Calu3 (cell line): ENCODE measurements at regions of chr10 and their contacts with region 1.

Region 1: DNA sequence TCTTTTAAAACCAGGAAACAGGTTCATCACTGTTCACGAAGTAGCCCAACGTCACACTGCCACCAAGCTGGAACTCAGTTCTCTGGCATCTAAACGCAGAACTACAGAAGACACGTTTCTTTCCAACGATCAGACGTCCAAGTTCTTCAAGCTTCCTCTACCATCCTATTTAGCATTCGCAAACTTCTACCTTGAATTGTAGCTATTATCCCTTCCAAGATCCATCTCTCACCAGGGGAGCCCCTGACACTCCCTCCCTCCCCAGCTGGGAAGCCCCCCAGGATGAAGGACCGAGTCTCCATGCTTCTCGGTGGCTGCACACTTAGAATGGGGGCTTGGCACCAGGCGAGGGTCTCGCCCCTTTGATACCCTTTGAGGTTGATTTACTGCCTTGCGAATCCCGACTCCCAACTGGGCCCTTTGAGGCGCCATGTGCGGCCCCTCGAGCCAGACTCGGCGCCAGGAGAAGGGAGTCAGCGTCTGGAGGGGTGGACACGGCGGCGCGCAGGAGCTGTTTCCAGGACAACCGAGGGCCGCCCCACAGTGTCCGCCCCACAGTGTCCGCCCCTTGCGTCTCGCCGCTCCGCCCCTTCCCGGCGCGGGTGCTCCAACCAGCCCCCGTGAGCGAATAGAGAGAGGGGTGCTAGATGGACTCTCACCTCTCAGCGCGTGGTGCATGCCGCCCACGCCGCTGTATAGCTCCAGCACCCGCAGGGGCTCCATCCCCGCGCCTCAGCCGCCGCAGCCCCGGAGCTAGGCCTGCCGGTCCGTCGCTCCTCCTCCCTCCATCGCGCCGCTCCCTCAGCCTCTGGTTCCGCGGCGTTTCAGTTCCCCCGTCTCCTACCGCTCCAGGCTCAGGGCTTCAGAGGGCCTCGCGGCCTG is at the start of gene TRDMT1:
- DNase-seq: peak; percentile 85
- H3K4me3 Mint-ChIP-seq: peak within 1 kb of the TSS; percentile 97
- H3K27ac Mint-ChIP-seq: peak within 1 kb of the TSS; percentile 91
- H3K4me1 Mint-ChIP-seq: peaks cover 44% of the 10 kb centered on the region
- H3K27me3 Mint-ChIP-seq: no peaks in the 10 kb centered on the region
- CTCF ChIP-seq: no peak
- total RNA-seq, gene TRDMT1: 7.9 and 10.3 TPM in 2 replicates

Region 2: GRCh38 chr10:16063350-16063749 is 1137.8 kb before region 1 on chr10:
- CTCF ChIA-PET with region 1: no interaction called
- intact Hi-C with region 1: no loop called
- DNase-seq: no peak
- H3K4me3 Mint-ChIP-seq: no peak overlapping the region
- H3K27ac Mint-ChIP-seq: no peak overlapping the region
- H3K4me1 Mint-ChIP-seq: no peaks in the 10 kb centered on the region
- H3K27me3 Mint-ChIP-seq: no peaks in the 10 kb centered on the region
- CTCF ChIP-seq: no peak

Region 3: GRCh38 chr10:16853201-16853600 is 348.0 kb before region 1 on chr10:
- CTCF ChIA-PET with region 1: no interaction called
- intact Hi-C with region 1: loop called (anchors 1 kb)
- DNase-seq: no peak
- H3K4me3 Mint-ChIP-seq: no peak overlapping the region
- H3K27ac Mint-ChIP-seq: no peak overlapping the region
- H3K4me1 Mint-ChIP-seq: peaks cover 27% of the 10 kb centered on the region
- H3K27me3 Mint-ChIP-seq: peaks cover 18% of the 10 kb centered on the region
- CTCF ChIP-seq: no peak

Region 4: GRCh38 chr10:17075533-17076359 is 125.4 kb before region 1 on chr10:
- CTCF ChIA-PET with region 1: no interaction called
- intact Hi-C with region 1: no loop called
- DNase-seq: peak; percentile 20
- H3K4me3 Mint-ChIP-seq: no peak overlapping the region
- H3K27ac Mint-ChIP-seq: peak overlapping the region; percentile 81
- H3K4me1 Mint-ChIP-seq: peaks cover 8% of the 10 kb centered on the region
- H3K27me3 Mint-ChIP-seq: no peaks in the 10 kb centered on the region
- CTCF ChIP-seq: no peak

Region 5: DNA sequence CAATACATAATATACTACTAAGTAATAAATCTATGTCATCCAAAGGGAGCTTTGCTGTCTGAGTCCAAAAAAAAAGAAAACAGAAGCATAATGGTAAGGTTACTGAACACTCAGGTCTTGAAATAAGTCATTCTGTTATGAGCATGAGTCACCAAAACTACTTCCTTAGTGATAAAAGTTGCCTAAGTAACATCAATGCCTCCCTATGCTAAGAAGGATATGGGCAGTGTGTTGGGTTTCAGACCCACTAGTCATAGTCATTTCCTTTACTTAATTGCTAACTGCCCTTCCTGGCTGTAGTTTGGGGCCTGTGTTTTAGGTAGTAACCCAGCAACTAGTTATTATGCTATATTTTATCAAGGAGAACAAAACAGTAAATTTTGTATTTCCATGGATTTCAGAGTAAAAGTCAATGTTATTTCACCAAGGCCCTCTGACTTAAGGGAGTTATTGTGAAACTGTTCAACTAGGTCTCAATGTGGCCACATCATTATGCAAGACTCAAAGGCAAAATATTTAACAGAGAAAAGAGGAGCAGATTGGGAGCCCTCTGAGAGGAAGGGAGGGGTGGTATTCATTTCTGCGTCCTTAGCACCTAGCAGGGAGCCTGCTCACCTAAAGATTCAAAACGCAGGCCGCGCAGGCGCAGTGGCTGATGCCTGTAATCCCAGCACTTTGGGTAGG is 15.2 kb after region 1 on chr10:
- CTCF ChIA-PET with region 1: interaction called, 10 read pairs
- intact Hi-C with region 1: no loop called
- DNase-seq: peak; percentile 58
- H3K4me3 Mint-ChIP-seq: peak overlapping the region; percentile 26
- H3K27ac Mint-ChIP-seq: peak overlapping the region; percentile 99
- H3K4me1 Mint-ChIP-seq: peaks cover 48% of the 10 kb centered on the region
- H3K27me3 Mint-ChIP-seq: no peaks in the 10 kb centered on the region
- CTCF ChIP-seq: no peak

Region 6: GRCh38 chr10:17228091-17228940 is 27.2 kb after region 1 on chr10 and contains the start of gene VIM:
- CTCF ChIA-PET with region 1: interaction called, 19 read pairs
- intact Hi-C with region 1: loop called (anchors 1 kb)
- DNase-seq: peak; percentile 90
- H3K4me3 Mint-ChIP-seq: peak within 1 kb of the TSS; percentile 95
- H3K27ac Mint-ChIP-seq: peak within 1 kb of the TSS; percentile 73
- H3K4me1 Mint-ChIP-seq: peaks cover 9% of the 10 kb centered on the region
- H3K27me3 Mint-ChIP-seq: no peaks in the 10 kb centered on the region
- CTCF ChIP-seq: no peak
- total RNA-seq, gene VIM: 318 and 486 TPM in 2 replicates

Region 7: GRCh38 chr10:17257466-17258321 is 56.5 kb after region 1 on chr10:
- CTCF ChIA-PET with region 1: no interaction called
- intact Hi-C with region 1: loop called (anchors 2 kb)
- DNase-seq: peak; percentile 64
- H3K4me3 Mint-ChIP-seq: peak overlapping the region; percentile 43
- H3K27ac Mint-ChIP-seq: peak overlapping the region; percentile 19
- H3K4me1 Mint-ChIP-seq: peaks cover 9% of the 10 kb centered on the region
- H3K27me3 Mint-ChIP-seq: peaks cover 23% of the 10 kb centered on the region
- CTCF ChIP-seq: peak; percentile 76